K562 (cell line): ENCODE measurements at regions of chr3 and their contacts with region 1.

Region 1: DNA sequence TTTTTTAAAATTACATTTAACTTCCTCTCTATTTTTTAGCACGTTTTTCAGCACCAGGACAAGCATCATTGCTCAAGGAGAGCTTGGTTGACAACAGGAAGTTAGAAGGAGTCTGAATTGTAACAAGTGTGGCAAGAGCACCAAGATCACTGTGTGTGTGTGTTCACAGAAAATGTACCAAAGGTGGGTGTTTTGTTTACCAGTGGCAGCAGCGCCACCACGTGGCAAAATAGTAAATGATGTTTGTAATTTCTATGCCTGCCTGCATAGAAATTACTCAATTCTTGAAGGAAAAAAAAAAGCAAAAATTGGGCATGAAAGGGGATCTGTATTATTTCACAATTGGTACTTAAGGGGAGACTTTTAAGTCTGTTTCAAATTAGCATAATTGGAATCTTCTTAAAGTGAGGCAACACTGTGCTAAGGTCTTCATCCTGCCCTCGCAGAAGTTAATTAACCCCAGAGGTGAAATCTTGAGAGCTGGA is 7.4 kb upstream of the U2SURP start:
- DNase-seq: peak; percentile 55 to 85 (median 63)
- ATAC-seq: peak; percentile 74
- H3K4me3 ChIP-seq: no peak overlapping the region
- H3K27ac ChIP-seq: no peak overlapping the region
- H3K4me1 ChIP-seq: peaks cover 8 to 22% of the 10 kb centered on the region in 2 experiments; a peak in 3 of 5 replicates
- H3K27me3 ChIP-seq: no peaks in the 10 kb centered on the region
- CTCF ChIP-seq: peak; percentile 73 to 88 (median 74)
- EP300 ChIP-seq: no peak
- POLR2A ChIP-seq: no peak
- RAD21 ChIP-seq: peak; percentile 74 to 87

Region 2: DNA sequence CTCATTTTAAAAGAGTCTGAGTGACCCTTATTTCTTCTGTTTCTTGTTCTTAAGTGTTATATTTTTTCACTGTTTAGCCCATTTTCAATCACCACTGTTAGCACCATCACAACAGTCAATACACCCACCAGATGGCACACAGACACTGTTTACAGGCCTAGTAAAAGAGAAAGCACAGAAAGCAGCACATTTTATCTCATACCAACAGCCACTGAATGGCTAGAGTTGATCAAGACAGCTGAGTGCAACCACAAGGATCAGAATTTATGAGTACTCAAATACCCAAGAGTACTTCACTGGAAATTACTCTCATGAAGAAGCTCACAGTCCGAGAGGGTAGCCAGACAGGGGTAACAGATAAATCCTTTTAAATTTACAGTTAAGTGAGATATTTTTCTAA is 971.6 kb before region 1 on chr3:
- CTCF ChIA-PET with region 1: no interaction called
- POLR2A ChIA-PET with region 1: no interaction called
- in situ Hi-C with region 1: no loop called
- intact Hi-C with region 1: loop called (anchors 5 kb)
- DNase-seq: peak; percentile 35 to 89 (median 56)
- ATAC-seq: peak; percentile 82
- H3K4me3 ChIP-seq: no peak overlapping the region
- H3K27ac ChIP-seq: peak overlapping the region; percentile 45; the same call in 2 of the 3 replicates
- H3K4me1 ChIP-seq: peaks cover 22 to 29% of the 10 kb centered on the region in 2 experiments; a peak in 4 of 5 replicates
- H3K27me3 ChIP-seq: no peaks in the 10 kb centered on the region
- CTCF ChIP-seq: peak; percentile 71 to 83 (median 72); a peak in 5 of 6 replicates
- EP300 ChIP-seq: peak; percentile 91
- POLR2A ChIP-seq: no peak
- RAD21 ChIP-seq: peak; percentile 94

Region 3: DNA sequence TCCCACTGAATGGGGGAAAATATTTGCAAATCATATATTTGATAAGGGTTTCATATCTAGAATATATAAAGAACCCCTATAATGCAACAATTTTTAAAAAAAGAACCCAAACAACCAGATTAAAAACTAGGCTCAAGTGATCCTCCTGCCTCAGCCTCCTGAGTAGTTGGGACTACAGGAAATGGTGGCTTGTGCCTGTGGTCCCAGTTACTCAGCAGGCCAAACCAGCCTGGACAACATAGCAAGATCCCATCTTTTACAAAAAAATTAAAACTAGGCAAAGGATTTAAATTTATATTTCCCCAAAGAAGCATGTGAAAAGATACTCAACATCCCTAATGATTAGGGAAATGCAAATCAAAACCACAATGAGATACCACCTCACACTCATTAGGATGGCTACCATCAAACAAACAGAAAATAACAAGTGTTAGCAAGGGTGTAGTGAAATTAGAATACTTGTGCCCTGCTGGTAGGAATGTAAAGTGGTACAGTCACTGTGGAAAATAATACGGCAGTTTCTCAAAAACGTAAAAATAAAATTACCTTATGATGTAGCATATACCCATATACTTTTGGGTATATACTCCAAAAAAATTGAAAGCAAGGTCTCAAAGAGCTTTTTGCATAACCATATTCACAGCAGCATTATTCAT is 864.4 kb before region 1 on chr3:
- CTCF ChIA-PET with region 1: interaction called, 5 read pairs
- POLR2A ChIA-PET with region 1: no interaction called
- in situ Hi-C with region 1: no loop called
- intact Hi-C with region 1: loop called (anchors 10 kb)
- DNase-seq: no peak
- ATAC-seq: no peak
- H3K4me3 ChIP-seq: no peak overlapping the region
- H3K27ac ChIP-seq: no peak overlapping the region
- H3K4me1 ChIP-seq: no peaks in the 10 kb centered on the region
- H3K27me3 ChIP-seq: no peaks in the 10 kb centered on the region
- CTCF ChIP-seq: no peak
- EP300 ChIP-seq: no peak
- POLR2A ChIP-seq: no peak
- RAD21 ChIP-seq: no peak

Region 4: GRCh38 chr3:142447852-142448823 is 545.9 kb before region 1 on chr3 and contains the start of gene XRN1:
- CTCF ChIA-PET with region 1: no interaction called
- POLR2A ChIA-PET with region 1: no interaction called
- in situ Hi-C with region 1: no loop called
- intact Hi-C with region 1: loop called (anchors 10 kb)
- DNase-seq: peak; percentile 96 to 99 (median 98)
- ATAC-seq: peak; percentile 95
- H3K4me3 ChIP-seq: peak within 1 kb of the TSS; percentile 95
- H3K27ac ChIP-seq: peak within 1 kb of the TSS; percentile 97
- H3K4me1 ChIP-seq: peaks cover 0 to 5% of the 10 kb centered on the region in 2 experiments; a peak in 2 of 5 replicates
- H3K27me3 ChIP-seq: no peaks in the 10 kb centered on the region
- CTCF ChIP-seq: no peak
- EP300 ChIP-seq: no peak; the same call in 1 of the 2 replicates
- POLR2A ChIP-seq: peak; percentile 89
- RAD21 ChIP-seq: no peak
- polyA plus RNA-seq, gene XRN1: 3.1 to 7.2 TPM

Region 5: DNA sequence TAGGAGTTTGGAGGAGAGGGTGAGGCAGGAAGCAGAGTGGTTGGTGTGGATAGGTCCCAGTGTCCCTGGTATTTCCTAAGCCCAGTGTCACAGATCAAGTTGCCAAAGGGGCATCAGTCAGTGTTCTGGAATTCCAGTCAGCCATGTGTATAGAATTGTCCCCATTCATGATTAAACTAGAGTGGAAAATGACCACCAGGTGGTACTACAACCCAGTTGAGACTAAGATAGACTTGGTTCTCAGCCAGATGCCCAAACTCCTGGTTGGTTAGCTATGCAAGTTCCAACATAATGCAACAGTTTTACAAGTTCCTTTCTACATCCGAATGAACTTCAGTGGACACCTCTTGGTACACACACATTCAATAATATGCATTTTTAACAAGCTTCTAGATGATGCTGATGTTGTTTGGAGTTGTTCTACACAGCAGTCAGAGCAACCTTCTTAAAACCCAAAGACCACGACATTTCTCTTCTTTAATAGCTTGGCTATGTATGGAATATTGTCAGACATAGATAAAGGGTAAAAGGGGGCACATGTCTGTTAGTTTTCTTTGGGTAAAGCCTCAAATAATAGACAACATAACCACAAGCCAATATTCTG is 407.1 kb before region 1 on chr3:
- CTCF ChIA-PET with region 1: interaction called, 20 read pairs
- POLR2A ChIA-PET with region 1: interaction called, 3 read pairs
- in situ Hi-C with region 1: loop called (anchors 5 kb)
- intact Hi-C with region 1: loop called (anchors 2 kb)
- DNase-seq: peak; percentile 43 to 77 (median 54)
- ATAC-seq: peak; percentile 93
- H3K4me3 ChIP-seq: no peak overlapping the region
- H3K27ac ChIP-seq: no peak overlapping the region
- H3K4me1 ChIP-seq: no peaks in the 10 kb centered on the region
- H3K27me3 ChIP-seq: no peaks in the 10 kb centered on the region
- CTCF ChIP-seq: peak; percentile 70 to 83 (median 72)
- EP300 ChIP-seq: no peak
- POLR2A ChIP-seq: no peak
- RAD21 ChIP-seq: peak; percentile 90 to 93

Region 6: GRCh38 chr3:142904639-142905436 is 89.2 kb before region 1 on chr3:
- CTCF ChIA-PET with region 1: no interaction called
- POLR2A ChIA-PET with region 1: no interaction called
- in situ Hi-C with region 1: no loop called
- intact Hi-C with region 1: no loop called
- DNase-seq: peak in 2 of 4 experiments; percentile 35 to 49
- ATAC-seq: peak; percentile 81
- H3K4me3 ChIP-seq: no peak overlapping the region
- H3K27ac ChIP-seq: no peak overlapping the region
- H3K4me1 ChIP-seq: no peaks in the 10 kb centered on the region; a peak in 2 of 5 replicates
- H3K27me3 ChIP-seq: 0 out of 5 replicates have a peak, but pooled peaks cover 0 to 3% of the 10 kb centered on the region in 2 experiments
- CTCF ChIP-seq: peak; percentile 36 to 56 (median 53); a peak in 4 of 6 replicates
- EP300 ChIP-seq: no peak
- POLR2A ChIP-seq: no peak
- RAD21 ChIP-seq: peak; percentile 63 to 77

Region 7: GRCh38 chr3:142929109-142929508 is 64.9 kb before region 1 on chr3:
- CTCF ChIA-PET with region 1: interaction called, 4 read pairs
- POLR2A ChIA-PET with region 1: no interaction called
- in situ Hi-C with region 1: no loop called
- intact Hi-C with region 1: loop called (anchors 2 kb)
- DNase-seq: peak; percentile 69 to 87 (median 73)
- ATAC-seq: peak; percentile 97
- H3K4me3 ChIP-seq: no peak overlapping the region
- H3K27ac ChIP-seq: no peak overlapping the region
- H3K4me1 ChIP-seq: peaks cover 0 to 14% of the 10 kb centered on the region in 2 experiments; a peak in 4 of 5 replicates
- H3K27me3 ChIP-seq: no peaks in the 10 kb centered on the region
- CTCF ChIP-seq: peak; percentile 79 to 86 (median 85)
- EP300 ChIP-seq: no peak
- POLR2A ChIP-seq: no peak
- RAD21 ChIP-seq: peak; percentile 61 to 86

Region 8: GRCh38 chr3:143040261-143040879 is 46.4 kb after region 1 on chr3:
- CTCF ChIA-PET with region 1: no interaction called
- POLR2A ChIA-PET with region 1: no interaction called
- in situ Hi-C with region 1: no loop called
- intact Hi-C with region 1: no loop called
- DNase-seq: peak in 2 of 4 experiments; percentile 24 to 36
- ATAC-seq: peak; percentile 65
- H3K4me3 ChIP-seq: no peak overlapping the region
- H3K27ac ChIP-seq: no peak overlapping the region
- H3K4me1 ChIP-seq: no peaks in the 10 kb centered on the region
- H3K27me3 ChIP-seq: no peaks in the 10 kb centered on the region
- CTCF ChIP-seq: peak; percentile 18 to 57 (median 42); a peak in 4 of 6 replicates
- EP300 ChIP-seq: no peak
- POLR2A ChIP-seq: no peak
- RAD21 ChIP-seq: peak; percentile 39